ENCODE measurements at regions of chr17 and their contacts with region 1.

Region 1: DNA sequence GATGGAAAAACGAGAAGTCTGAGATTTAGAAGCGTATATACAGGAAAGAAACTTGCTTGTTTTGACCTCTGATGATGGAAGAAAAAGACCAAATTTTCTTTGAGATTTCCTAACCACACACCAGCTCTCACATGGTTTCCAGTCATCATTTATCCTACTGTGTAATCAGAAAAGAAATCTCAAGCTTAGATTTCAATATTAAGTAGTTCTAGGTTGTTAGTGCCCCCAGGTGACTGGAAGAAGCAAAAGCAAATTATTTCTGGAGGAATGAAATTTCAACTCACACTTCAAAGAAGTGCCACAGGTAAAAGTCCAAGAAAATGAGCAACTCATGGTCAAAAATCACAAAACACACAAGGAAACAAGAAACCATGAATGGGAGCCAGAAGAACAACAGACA is 51.8 kb upstream of the KDM6B start:
- DNase-seq: no peak
- H3K4me3 ChIP-seq: no peak overlapping the region
- CTCF ChIP-seq: no peak

Region 2: GRCh38 chr17:7650509-7651096 is 131.6 kb before region 1 on chr17 and contains the start of gene ATP1B2:
- CTCF ChIA-PET with region 1: no interaction called
- POLR2A ChIA-PET with region 1: no interaction called
- DNase-seq: no peak
- H3K4me3 ChIP-seq: peak within 1 kb of the TSS; percentile 32
- CTCF ChIP-seq: no peak

Region 3: GRCh38 chr17:7755095-7755890 is 26.9 kb before region 1 on chr17:
- CTCF ChIA-PET with region 1: interaction called, 384 read pairs
- POLR2A ChIA-PET with region 1: no interaction called
- DNase-seq: no peak
- H3K4me3 ChIP-seq: no peak overlapping the region
- CTCF ChIP-seq: no peak

Region 4: GRCh38 chr17:7769854-7770253 is 12.4 kb before region 1 on chr17:
- CTCF ChIA-PET with region 1: interaction called, 13 read pairs
- POLR2A ChIA-PET with region 1: no interaction called
- DNase-seq: no peak
- H3K4me3 ChIP-seq: no peak overlapping the region
- CTCF ChIP-seq: no peak